ENCODE measurements at regions of chr2 and their contacts with region 1.

Region 1: GRCh38 chr2:217756375-217757107 is 246.3 kb downstream of the TNS1 start:
- DNase-seq: peak; percentile 89
- ATAC-seq: peak; percentile 84
- H3K4me3 Mint-ChIP-seq: peak overlapping the region; percentile 61
- H3K27ac Mint-ChIP-seq: peak overlapping the region; percentile 82
- H3K4me1 Mint-ChIP-seq: peaks cover 24% of the 10 kb centered on the region
- H3K27me3 Mint-ChIP-seq: peaks cover 4% of the 10 kb centered on the region

Region 2: DNA sequence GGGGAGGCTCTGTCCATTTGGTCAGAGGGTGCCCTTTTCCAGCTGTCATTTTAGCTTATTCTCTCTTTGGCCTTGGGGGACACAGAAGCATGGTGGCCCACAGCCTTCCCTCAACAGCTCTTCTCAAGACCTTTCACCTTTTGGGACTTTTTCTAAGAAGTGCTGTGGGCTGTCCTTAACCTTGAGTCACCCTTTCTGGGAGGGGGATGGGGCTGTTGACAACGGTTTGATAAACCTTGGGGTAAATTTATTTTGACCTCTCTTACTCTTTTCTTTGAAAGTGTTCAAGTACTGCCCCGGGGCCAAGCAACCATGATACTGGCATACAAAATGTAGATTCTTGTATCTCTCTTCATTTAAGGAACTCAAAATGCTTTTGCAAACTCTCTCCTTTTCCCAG is 1074.9 kb before region 1 on chr2:
- CTCF ChIA-PET with region 1: no interaction called
- POLR2A ChIA-PET with region 1: no interaction called
- intact Hi-C with region 1: loop called in 1 of 2 experiments (anchors 1 kb)
- DNase-seq: no peak
- ATAC-seq: no peak
- H3K4me3 Mint-ChIP-seq: no peak overlapping the region
- H3K27ac Mint-ChIP-seq: no peak overlapping the region
- H3K4me1 Mint-ChIP-seq: peaks cover 8% of the 10 kb centered on the region
- H3K27me3 Mint-ChIP-seq: peaks cover 13% of the 10 kb centered on the region

Region 3: DNA sequence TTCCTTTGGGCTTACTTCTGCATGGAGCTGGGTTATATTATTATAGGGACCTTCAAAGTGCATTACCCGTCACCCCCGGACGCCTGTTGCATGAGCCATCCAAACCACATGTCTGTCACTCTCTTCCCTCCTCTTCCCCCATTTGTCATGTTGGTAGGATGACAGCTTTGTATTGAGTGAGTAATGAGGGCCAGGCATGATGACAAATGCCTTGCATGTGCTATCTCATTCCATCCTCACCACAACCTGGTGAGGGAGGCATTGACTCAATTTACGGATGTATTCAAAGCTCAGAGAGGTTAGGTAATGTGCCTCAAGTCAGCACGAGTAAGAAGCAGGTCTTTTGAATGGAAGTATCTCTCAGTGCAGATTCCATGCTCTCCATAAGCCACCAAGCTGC is 386.1 kb before region 1 on chr2:
- CTCF ChIA-PET with region 1: no interaction called
- POLR2A ChIA-PET with region 1: no interaction called
- intact Hi-C with region 1: loop called in 1 of 2 experiments (anchors 5 kb)
- DNase-seq: peak; percentile 34
- ATAC-seq: peak; percentile 94
- H3K4me3 Mint-ChIP-seq: no peak overlapping the region
- H3K27ac Mint-ChIP-seq: no peak overlapping the region
- H3K4me1 Mint-ChIP-seq: no peaks in the 10 kb centered on the region
- H3K27me3 Mint-ChIP-seq: no peaks in the 10 kb centered on the region